KBM-7 (cell line): ENCODE measurements at regions of chr1 and their contacts with region 1.

Region 1: GRCh38 chr1:27044613-27045151 is 32.0 kb upstream of the TENT5B start:
- DNase-seq: peak; percentile 86

Region 2: GRCh38 chr1:27097484-27097917 is 52.8 kb after region 1 on chr1:
- in situ Hi-C with region 1: loop called (anchors 10 kb)
- DNase-seq: peak; percentile 94